CD8-positive, alpha-beta T cell (primary cell): ENCODE measurements at regions of chr1 and their contacts with region 1.

Region 1: GRCh38 chr1:93878889-93879586 is at the start of gene DNTTIP2:
- DNase-seq: peak; percentile 74 to 95 (median 88)
- ATAC-seq: peak; percentile 81
- H3K4me3 ChIP-seq: peak within 1 kb of the TSS; percentile 87 to 99
- H3K4me3 Mint-ChIP-seq: peak within 1 kb of the TSS; percentile 95
- H3K27ac ChIP-seq: peak within 1 kb of the TSS; percentile 95 to 99
- H3K27ac Mint-ChIP-seq: peak within 1 kb of the TSS; percentile 98
- H3K4me1 ChIP-seq: peaks cover 32% of the 10 kb centered on the region
- H3K4me1 Mint-ChIP-seq: peaks cover 46% of the 10 kb centered on the region
- H3K27me3 ChIP-seq: no peaks in the 10 kb centered on the region
- H3K27me3 Mint-ChIP-seq: no peaks in the 10 kb centered on the region
- CTCF ChIP-seq: no peak
- total RNA-seq, gene DNTTIP2: 126 to 130 TPM

Region 2: GRCh38 chr1:91948501-91949355 is 1930.3 kb before region 1 on chr1:
- CTCF ChIA-PET with region 1: no interaction called
- POLR2A ChIA-PET with region 1: no interaction called
- intact Hi-C with region 1: loop called in 1 of 2 experiments (anchors 10 kb)
- DNase-seq: peak; percentile 11 to 93 (median 41)
- ATAC-seq: peak; percentile 75
- H3K4me3 ChIP-seq: peak overlapping the region; percentile 17 to 46
- H3K4me3 Mint-ChIP-seq: peak overlapping the region; percentile 63
- H3K27ac ChIP-seq: peak overlapping the region; percentile 44 to 88
- H3K27ac Mint-ChIP-seq: peak overlapping the region; percentile 92
- H3K4me1 ChIP-seq: peaks cover 13% of the 10 kb centered on the region
- H3K4me1 Mint-ChIP-seq: peaks cover 22% of the 10 kb centered on the region
- H3K27me3 ChIP-seq: no peaks in the 10 kb centered on the region
- H3K27me3 Mint-ChIP-seq: no peaks in the 10 kb centered on the region
- CTCF ChIP-seq: no peak

Region 3: DNA sequence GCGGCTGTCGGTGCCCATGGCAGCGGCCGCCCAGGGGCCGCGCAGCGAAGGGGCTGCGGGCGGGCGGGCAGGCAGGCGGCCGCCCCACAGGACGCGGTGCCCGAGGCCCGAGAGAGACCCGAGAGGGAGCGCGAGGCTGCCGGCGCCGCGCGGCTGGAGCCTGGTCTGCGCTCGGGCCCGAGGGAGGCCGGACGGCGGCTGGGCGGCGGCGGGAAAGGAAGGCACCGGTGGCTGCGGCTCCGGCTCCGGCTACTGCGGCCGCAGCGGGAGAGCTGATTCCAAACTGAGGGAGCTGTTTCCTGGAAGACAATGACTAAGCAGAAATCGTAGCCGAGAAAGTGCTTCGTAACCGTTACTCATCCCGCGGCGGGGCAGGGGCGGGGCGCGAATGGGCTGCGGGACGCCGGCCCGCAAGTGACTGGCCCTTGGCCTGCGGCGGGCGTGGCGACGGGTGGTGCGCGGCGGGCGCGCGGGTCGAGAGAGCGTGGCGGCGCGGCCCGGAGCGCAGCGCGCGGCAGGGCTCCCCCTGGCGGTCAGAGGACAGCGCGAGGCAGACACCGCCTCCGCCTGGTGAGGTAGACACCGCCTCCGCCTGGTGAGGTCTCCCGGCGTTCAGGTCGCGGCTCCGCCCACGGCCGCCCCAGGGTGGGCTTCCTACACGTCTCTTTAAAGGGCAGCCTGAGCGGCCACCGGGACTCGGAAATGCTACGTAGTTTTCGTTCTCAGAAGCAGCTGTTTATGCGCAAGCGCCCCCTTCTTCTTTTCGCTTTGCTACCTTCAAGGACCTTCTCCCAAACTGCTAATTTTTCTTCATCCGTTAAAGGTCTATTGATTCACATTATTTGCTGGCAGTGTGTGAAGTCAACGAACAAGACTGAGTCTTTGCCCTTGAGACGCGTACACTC is 30.4 kb after region 1 on chr1 and contains the start of gene GCLM:
- CTCF ChIA-PET with region 1: interaction called, 17 read pairs
- POLR2A ChIA-PET with region 1: interaction called, 20 read pairs
- intact Hi-C with region 1: loop called (anchors 1 kb)
- DNase-seq: peak; percentile 76 to 95 (median 91)
- ATAC-seq: peak; percentile 89
- H3K4me3 ChIP-seq: peak within 1 kb of the TSS; percentile 62 to 67
- H3K4me3 Mint-ChIP-seq: peak within 1 kb of the TSS; percentile 88
- H3K27ac ChIP-seq: peak within 1 kb of the TSS; percentile 72 to 76
- H3K27ac Mint-ChIP-seq: peak within 1 kb of the TSS; percentile 92
- H3K4me1 ChIP-seq: peaks cover 12% of the 10 kb centered on the region
- H3K4me1 Mint-ChIP-seq: peaks cover 37% of the 10 kb centered on the region
- H3K27me3 ChIP-seq: no peaks in the 10 kb centered on the region
- H3K27me3 Mint-ChIP-seq: no peaks in the 10 kb centered on the region
- CTCF ChIP-seq: peak; percentile 86
- total RNA-seq, gene GCLM: 6.4 to 6.8 TPM